ENCODE measurements at regions of chr11 and their contacts with region 1.

Region 1: GRCh38 chr11:45110562-45110961 is 35.9 kb upstream of the PRDM11 start:
- DNase-seq: peak; percentile 86
- H3K4me3 Mint-ChIP-seq: no peak overlapping the region
- H3K27ac Mint-ChIP-seq: no peak overlapping the region
- H3K4me1 Mint-ChIP-seq: no peaks in the 10 kb centered on the region
- H3K27me3 Mint-ChIP-seq: peaks cover 24% of the 10 kb centered on the region

Region 2: DNA sequence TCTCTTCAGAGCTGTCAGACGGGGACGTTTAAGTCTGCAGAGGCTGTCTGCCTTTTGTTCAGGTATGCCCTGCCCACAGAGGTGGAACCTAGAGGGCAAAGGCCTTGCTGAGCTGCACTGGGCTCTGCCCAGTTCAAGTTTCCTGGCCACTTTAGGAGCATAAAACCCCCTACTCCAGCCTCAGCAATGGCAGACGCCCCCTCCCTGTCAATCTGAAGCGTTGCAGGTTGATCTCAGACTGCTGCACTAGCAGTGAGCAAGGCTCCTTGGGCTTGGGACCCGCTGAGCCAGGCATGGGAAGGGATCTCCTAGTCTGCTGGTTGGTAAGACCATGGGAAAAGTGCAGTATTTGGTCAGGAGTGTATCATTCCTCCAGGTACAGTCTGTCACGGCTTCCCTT is 93.2 kb before region 1 on chr11:
- intact Hi-C with region 1: no loop called
- DNase-seq: no peak
- H3K4me3 Mint-ChIP-seq: no peak overlapping the region
- H3K27ac Mint-ChIP-seq: no peak overlapping the region
- H3K4me1 Mint-ChIP-seq: peaks cover 5% of the 10 kb centered on the region
- H3K27me3 Mint-ChIP-seq: peaks cover 33% of the 10 kb centered on the region

Region 3: GRCh38 chr11:45289369-45289768 is 178.8 kb after region 1 on chr11:
- intact Hi-C with region 1: loop called (anchors 1 kb)
- DNase-seq: no peak
- H3K4me3 Mint-ChIP-seq: no peak overlapping the region
- H3K27ac Mint-ChIP-seq: no peak overlapping the region
- H3K4me1 Mint-ChIP-seq: no peaks in the 10 kb centered on the region
- H3K27me3 Mint-ChIP-seq: peaks cover 68% of the 10 kb centered on the region

Measured in activated CD4-positive, alpha-beta T cell treated with anti-CD3 and anti-CD28 coated beads, Interleukin-2, amount 10 ng/mL, durations not matched to agents 24 days and 14 days (primary cell).